Mammary epithelial cell (primary cell): ENCODE measurements at regions of chr9 and their contacts with region 1.

Region 1: DNA sequence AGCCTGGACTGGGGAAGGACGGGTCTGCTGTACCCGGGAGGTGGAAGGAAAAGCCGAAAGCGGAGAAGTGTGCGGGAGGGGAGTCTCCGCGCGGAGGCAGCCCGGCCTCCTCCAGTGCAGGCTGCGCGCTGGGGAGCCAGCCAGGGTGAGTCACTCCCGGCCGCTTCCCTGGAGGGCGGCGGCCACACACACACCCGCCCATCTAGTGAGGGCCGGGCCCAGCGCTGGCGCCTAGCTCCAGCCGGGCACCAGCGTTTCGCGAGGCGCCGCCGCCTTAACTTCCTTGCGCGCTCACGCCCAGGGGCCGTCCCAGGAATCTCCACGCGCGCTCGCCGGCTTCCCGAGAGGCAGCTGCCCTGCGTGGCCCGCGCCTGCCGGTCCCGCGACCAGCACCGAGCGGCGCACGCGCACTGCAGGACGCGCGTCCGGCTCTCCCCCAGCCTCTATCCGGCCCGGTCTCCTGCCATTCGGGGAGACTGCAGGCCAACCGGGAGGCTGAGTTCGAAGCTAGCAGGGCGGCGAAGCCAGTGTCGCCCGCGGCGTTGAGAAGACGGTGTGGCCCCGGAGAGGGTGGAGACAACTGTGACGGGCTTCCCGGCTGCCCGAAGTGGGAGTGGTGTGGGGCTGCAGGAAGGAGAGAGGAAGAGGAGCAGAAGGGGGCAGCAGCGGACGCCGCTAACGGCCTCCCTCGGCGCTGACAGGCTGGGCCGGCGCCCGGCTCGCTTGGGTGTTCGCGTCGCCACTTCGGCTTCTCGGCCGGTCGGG is at the start of gene JAK2:
- DNase-seq: peak; percentile 95
- H3K4me3 ChIP-seq: peak within 1 kb of the TSS; percentile 67 to 81 (median 73)
- H3K27ac ChIP-seq: peak within 1 kb of the TSS; percentile 79
- H3K4me1 ChIP-seq: peaks cover 23% of the 10 kb centered on the region
- H3K27me3 ChIP-seq: no peaks in the 10 kb centered on the region
- CTCF ChIP-seq: peak in 1 of 2 donors; percentile 47
- total RNA-seq, gene JAK2: 5.7 to 6.2 TPM

Region 2: DNA sequence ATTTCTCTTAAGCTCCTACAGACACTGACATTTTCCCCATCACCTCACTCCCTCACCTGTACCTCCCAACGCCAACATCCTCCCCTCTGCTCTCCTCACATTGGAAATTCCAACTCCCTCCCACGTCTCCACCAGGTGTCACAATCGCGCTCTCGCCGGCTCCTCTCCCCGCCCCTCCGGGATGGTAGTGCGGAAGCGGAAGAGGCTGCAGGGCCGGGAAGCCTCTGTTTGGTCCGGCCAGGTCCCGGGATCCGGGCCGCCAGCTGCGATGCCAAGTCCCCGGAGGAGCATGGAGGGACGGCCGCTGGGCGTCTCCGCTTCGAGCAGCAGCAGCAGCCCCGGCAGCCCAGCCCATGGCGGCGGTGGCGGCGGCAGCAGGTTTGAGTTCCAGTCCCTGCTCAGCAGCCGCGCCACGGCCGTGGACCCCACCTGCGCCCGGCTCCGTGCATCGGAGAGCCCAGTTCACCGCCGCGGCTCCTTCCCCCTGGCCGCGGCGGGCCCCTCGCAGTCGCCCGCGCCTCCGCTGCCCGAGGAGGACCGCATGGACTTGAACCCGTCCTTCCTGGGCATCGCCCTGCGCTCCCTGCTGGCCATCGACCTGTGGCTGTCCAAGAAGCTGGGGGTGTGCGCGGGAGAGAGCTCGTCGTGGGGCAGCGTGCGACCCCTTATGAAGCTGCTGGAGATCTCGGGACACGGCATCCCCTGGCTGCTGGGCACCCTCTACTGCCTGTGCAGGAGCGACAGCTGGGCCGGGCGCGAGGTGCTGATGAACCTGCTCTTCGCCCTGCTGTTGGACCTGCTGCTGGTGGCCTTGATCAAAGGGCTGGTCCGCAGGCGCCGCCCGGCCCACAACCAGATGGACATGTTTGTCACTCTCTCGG is 322.5 kb before region 1 on chr9 and contains the start of gene PLPP6:
- CTCF ChIA-PET with region 1: no interaction called
- dilution Hi-C with region 1: no loop called
- in situ Hi-C with region 1: no loop called
- intact Hi-C with region 1: loop called (anchors 5 kb)
- DNase-seq: peak; percentile 95
- H3K4me3 ChIP-seq: peak within 1 kb of the TSS; percentile 76 to 92 (median 87)
- H3K27ac ChIP-seq: peak within 1 kb of the TSS; percentile 60
- H3K4me1 ChIP-seq: peaks cover 49% of the 10 kb centered on the region
- H3K27me3 ChIP-seq: no peaks in the 10 kb centered on the region
- CTCF ChIP-seq: peak in 1 of 2 donors; percentile 56
- total RNA-seq, gene PLPP6: 10.9 to 12.0 TPM

Region 3: DNA sequence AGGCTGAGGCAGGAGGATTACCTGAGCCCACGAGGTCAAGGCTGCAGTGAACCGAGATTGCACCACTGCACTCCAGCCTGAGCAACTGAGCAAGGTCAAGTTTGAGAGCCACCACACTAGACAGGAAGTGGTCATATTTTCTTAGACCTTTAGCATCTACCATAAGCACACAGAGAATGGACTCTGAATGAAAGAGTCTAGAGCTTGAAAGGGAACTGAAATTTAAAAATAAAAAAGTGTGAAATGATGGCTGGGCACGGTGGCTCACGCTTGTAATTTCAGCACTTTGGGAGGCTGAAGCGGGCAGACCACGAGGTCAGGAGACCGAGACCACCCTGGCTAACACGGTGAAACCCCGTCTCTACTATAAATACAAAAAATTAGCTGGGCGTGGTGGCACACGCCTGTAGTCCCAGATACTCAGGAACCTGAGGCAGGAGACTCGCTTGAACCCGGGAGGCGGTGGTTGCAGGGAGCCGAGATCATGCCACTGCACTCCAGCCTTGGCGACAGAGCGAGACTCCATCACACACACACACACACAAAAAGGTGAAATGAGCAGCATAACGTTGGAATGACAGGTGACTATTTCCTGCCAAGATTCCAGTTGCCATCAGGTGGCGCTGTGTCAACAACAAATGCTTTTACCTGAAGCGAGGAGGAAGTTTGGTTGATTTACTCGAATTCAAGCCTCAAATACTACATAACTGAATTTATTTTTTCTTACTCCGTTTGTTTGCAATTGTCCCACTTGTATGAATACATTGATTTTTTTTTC is 222.5 kb before region 1 on chr9:
- CTCF ChIA-PET with region 1: interaction called, 11 read pairs
- dilution Hi-C with region 1: no loop called
- in situ Hi-C with region 1: loop called (anchors 5 to 10 kb)
- intact Hi-C with region 1: loop called (anchors 1 kb)
- DNase-seq: peak; percentile 66
- H3K4me3 ChIP-seq: no peak overlapping the region
- H3K27ac ChIP-seq: no peak overlapping the region
- H3K4me1 ChIP-seq: no peaks in the 10 kb centered on the region
- H3K27me3 ChIP-seq: no peaks in the 10 kb centered on the region
- CTCF ChIP-seq: peak; percentile 79 to 87

Region 4: GRCh38 chr9:4832786-4833579 is 151.8 kb before region 1 on chr9:
- CTCF ChIA-PET with region 1: no interaction called
- dilution Hi-C with region 1: no loop called
- in situ Hi-C with region 1: no loop called
- intact Hi-C with region 1: loop called (anchors 10 kb)
- DNase-seq: peak; percentile 99
- H3K4me3 ChIP-seq: no peak overlapping the region
- H3K27ac ChIP-seq: peak overlapping the region; percentile 84
- H3K4me1 ChIP-seq: peaks cover 40% of the 10 kb centered on the region
- H3K27me3 ChIP-seq: no peaks in the 10 kb centered on the region
- CTCF ChIP-seq: no peak

Region 5: GRCh38 chr9:5288591-5288990 is 303.8 kb after region 1 on chr9:
- CTCF ChIA-PET with region 1: no interaction called
- dilution Hi-C with region 1: no loop called
- in situ Hi-C with region 1: no loop called
- intact Hi-C with region 1: no loop called
- DNase-seq: no peak
- H3K4me3 ChIP-seq: no peak overlapping the region
- H3K27ac ChIP-seq: no peak overlapping the region
- H3K4me1 ChIP-seq: no peaks in the 10 kb centered on the region
- H3K27me3 ChIP-seq: peaks cover 2% of the 10 kb centered on the region
- CTCF ChIP-seq: no peak

Region 6: GRCh38 chr9:5450359-5451091 is 465.7 kb after region 1 on chr9 and contains the start of gene CD274:
- CTCF ChIA-PET with region 1: no interaction called
- dilution Hi-C with region 1: no loop called
- in situ Hi-C with region 1: no loop called
- intact Hi-C with region 1: loop called (anchors 5 kb)
- DNase-seq: peak; percentile 97
- H3K4me3 ChIP-seq: peak within 1 kb of the TSS; percentile 66 to 88 (median 73)
- H3K27ac ChIP-seq: peak within 1 kb of the TSS; percentile 91
- H3K4me1 ChIP-seq: peaks cover 75% of the 10 kb centered on the region
- H3K27me3 ChIP-seq: no peaks in the 10 kb centered on the region
- CTCF ChIP-seq: peak; percentile 48 to 86
- total RNA-seq, gene CD274: 19.5 to 30.6 TPM

Region 7: GRCh38 chr9:5608298-5609225 is 623.8 kb after region 1 on chr9:
- CTCF ChIA-PET with region 1: no interaction called
- dilution Hi-C with region 1: no loop called
- in situ Hi-C with region 1: no loop called
- intact Hi-C with region 1: loop called (anchors 5 kb)
- DNase-seq: peak; percentile 46
- H3K4me3 ChIP-seq: peak overlapping the region; percentile 18 to 36 (median 25)
- H3K27ac ChIP-seq: no peak overlapping the region
- H3K4me1 ChIP-seq: peaks cover 3% of the 10 kb centered on the region
- H3K27me3 ChIP-seq: no peaks in the 10 kb centered on the region
- CTCF ChIP-seq: no peak